ENCODE measurements at regions of chr6 and their contacts with region 1.

Region 1: GRCh38 chr6:79646006-79646405 is 14.9 kb downstream of the SH3BGRL2 start:
- DNase-seq: no peak
- H3K4me3 ChIP-seq: no peak overlapping the region
- H3K4me3 Mint-ChIP-seq: no peak overlapping the region
- H3K27ac ChIP-seq: no peak overlapping the region
- H3K27ac Mint-ChIP-seq: no peak overlapping the region
- H3K4me1 ChIP-seq: no peaks in the 10 kb centered on the region
- H3K4me1 Mint-ChIP-seq: peaks cover 0 to 1% (median 0%) of the 10 kb centered on the region in 4 donors
- H3K27me3 ChIP-seq: no peaks in the 10 kb centered on the region
- H3K27me3 Mint-ChIP-seq: peaks cover 2 to 11% of the 10 kb centered on the region in 2 donors

Region 2: GRCh38 chr6:79672631-79673111 is 26.7 kb after region 1 on chr6:
- CTCF ChIA-PET with region 1: interaction called, 12 read pairs
- POLR2A ChIA-PET with region 1: no interaction called
- intact Hi-C with region 1: no loop called
- DNase-seq: no peak
- H3K4me3 ChIP-seq: no peak overlapping the region
- H3K4me3 Mint-ChIP-seq: no peak overlapping the region
- H3K27ac ChIP-seq: no peak overlapping the region
- H3K27ac Mint-ChIP-seq: peak overlapping the region in 2 of 7 donors; percentile 6 to 11
- H3K4me1 ChIP-seq: peaks cover 25% of the 10 kb centered on the region
- H3K4me1 Mint-ChIP-seq: peaks cover 12 to 27% (median 18%) of the 10 kb centered on the region in 4 donors
- H3K27me3 ChIP-seq: no peaks in the 10 kb centered on the region
- H3K27me3 Mint-ChIP-seq: no peaks in the 10 kb centered on the region

Region 3: GRCh38 chr6:79713701-79714322 is 67.8 kb after region 1 on chr6:
- CTCF ChIA-PET with region 1: interaction called, 4 read pairs
- POLR2A ChIA-PET with region 1: no interaction called
- intact Hi-C with region 1: loop called (anchors 1 kb)
- DNase-seq: peak in 4 of 5 donors; percentile 4 to 27 (median 12)
- H3K4me3 ChIP-seq: no peak overlapping the region
- H3K4me3 Mint-ChIP-seq: no peak overlapping the region
- H3K27ac ChIP-seq: no peak overlapping the region
- H3K27ac Mint-ChIP-seq: peak overlapping the region in 1 of 7 donors; percentile 5
- H3K4me1 ChIP-seq: no peaks in the 10 kb centered on the region
- H3K4me1 Mint-ChIP-seq: no peaks in the 10 kb centered on the region
- H3K27me3 ChIP-seq: no peaks in the 10 kb centered on the region
- H3K27me3 Mint-ChIP-seq: peaks cover 2 to 3% of the 10 kb centered on the region in 2 donors

Region 4: GRCh38 chr6:79724816-79725215 is 78.8 kb after region 1 on chr6:
- CTCF ChIA-PET with region 1: no interaction called
- POLR2A ChIA-PET with region 1: no interaction called
- intact Hi-C with region 1: no loop called
- DNase-seq: no peak
- H3K4me3 ChIP-seq: no peak overlapping the region
- H3K4me3 Mint-ChIP-seq: no peak overlapping the region
- H3K27ac ChIP-seq: no peak overlapping the region
- H3K27ac Mint-ChIP-seq: no peak overlapping the region
- H3K4me1 ChIP-seq: no peaks in the 10 kb centered on the region
- H3K4me1 Mint-ChIP-seq: no peaks in the 10 kb centered on the region
- H3K27me3 ChIP-seq: no peaks in the 10 kb centered on the region
- H3K27me3 Mint-ChIP-seq: peaks cover 8% of the 10 kb centered on the region in 2 donors

Region 5: DNA sequence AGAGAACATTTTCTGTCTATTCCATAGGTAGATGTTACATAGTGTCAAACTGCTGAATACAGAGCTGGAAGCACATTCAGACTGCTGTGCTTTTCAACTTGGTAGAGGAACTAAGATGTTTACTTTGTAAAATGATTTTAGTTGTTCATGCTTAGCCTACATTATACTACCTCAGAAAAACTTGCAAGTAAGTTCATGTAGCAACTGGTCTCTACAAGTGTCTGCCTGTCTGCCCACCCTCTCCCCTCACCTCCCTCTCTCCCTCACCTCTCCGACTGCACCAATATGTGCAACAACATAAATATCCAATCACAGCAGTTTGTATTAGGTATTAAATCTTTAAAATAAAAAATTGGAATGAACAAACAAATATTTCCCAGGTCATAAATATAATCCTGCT is 276.0 kb after region 1 on chr6:
- CTCF ChIA-PET with region 1: no interaction called
- POLR2A ChIA-PET with region 1: no interaction called
- intact Hi-C with region 1: no loop called
- DNase-seq: no peak
- H3K4me3 ChIP-seq: no peak overlapping the region
- H3K4me3 Mint-ChIP-seq: no peak overlapping the region
- H3K27ac ChIP-seq: no peak overlapping the region
- H3K27ac Mint-ChIP-seq: no peak overlapping the region
- H3K4me1 ChIP-seq: no peaks in the 10 kb centered on the region
- H3K4me1 Mint-ChIP-seq: no peaks in the 10 kb centered on the region
- H3K27me3 ChIP-seq: no peaks in the 10 kb centered on the region
- H3K27me3 Mint-ChIP-seq: peaks cover 0 to 2% of the 10 kb centered on the region in 2 donors